Caco-2 (cell line): ENCODE measurements at regions of chr5 and their contacts with region 1.

Region 1: DNA sequence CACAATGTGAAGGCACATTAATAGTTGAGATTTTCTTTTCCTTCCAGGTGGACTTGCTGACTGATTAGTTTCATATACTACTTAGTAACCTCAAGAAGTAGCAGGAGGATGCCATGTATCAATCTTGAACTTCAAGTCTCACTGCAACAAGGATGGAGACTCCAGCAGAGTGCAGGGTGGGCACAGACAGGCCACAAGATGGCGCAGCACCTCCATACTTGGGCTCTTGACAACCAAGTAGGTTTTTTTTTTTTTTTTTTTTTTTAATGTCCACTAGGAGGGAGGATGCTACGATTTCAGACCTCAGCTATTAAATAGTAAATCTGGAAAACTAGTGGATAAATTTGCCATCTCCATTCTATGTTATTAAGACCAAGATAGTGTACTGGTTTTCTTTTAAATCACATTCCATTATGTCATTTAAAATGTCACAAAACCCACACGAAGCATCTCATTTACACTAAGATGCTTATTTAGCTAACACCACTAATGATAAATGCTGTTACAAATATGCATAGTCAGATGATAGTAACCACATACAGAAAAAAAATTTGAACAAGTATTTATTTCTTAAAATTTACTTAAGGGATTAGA is 58.6 kb downstream of the IL6ST start:
- DNase-seq: peak; percentile 87
- H3K4me3 ChIP-seq: no peak overlapping the region
- H3K4me3 Mint-ChIP-seq: no peak overlapping the region
- H3K27ac Mint-ChIP-seq: peak overlapping the region; percentile 100
- H3K4me1 ChIP-seq: peaks cover 44% of the 10 kb centered on the region
- H3K4me1 Mint-ChIP-seq: peaks cover 48% of the 10 kb centered on the region
- H3K27me3 ChIP-seq: no peaks in the 10 kb centered on the region
- H3K27me3 Mint-ChIP-seq: no peaks in the 10 kb centered on the region
- CTCF ChIP-seq: peak; percentile 85 to 95

Region 2: DNA sequence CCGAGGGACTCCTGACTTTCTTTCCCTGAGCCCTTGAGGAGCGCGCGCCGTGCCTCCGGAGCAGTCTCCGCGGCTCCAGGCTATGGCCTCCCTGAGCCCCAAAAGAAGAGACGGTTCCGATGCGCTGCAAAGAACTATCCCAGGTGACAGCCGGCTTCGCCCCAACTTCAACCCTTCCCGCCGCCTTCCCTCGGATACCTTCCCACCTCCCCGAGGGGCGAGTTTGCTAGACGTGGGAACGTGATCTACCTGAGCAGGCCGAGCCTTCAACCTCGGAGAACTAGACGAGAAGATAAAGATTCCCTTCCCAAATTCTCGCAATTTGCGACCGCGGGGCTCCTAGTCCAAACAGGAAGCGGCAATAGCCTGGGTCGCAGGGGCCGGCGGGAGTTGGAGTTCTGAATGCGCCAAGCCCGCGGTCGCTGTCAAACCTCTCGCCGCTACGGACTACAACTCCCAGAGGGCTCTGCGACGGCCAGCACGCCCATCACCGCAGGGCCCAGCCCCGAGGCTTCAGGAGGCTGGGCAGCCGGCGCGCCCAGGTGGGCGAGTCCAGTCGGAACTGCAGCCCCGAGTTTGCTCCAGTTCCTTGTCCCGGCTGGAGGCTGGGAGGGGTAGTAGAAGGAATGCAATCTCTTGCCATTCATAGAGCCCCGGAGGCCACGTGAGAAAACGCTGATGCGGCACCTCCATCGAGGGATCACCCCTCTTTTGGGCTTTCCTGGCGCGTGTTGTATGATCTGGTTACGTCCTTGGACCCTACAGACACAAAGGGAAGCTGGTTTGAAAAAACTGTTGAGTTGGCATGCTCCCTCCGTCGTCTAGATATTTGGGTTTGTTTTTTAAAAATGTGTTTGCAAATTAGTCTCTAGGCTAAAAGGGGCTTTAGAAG is 224.0 kb before region 1 on chr5 and contains the start of gene SLC38A9:
- CTCF ChIA-PET with region 1: no interaction called
- POLR2A ChIA-PET with region 1: no interaction called
- intact Hi-C with region 1: loop called (anchors 1 kb)
- DNase-seq: peak; percentile 96 to 97
- H3K4me3 ChIP-seq: peak within 1 kb of the TSS; percentile 97
- H3K4me3 Mint-ChIP-seq: peak within 1 kb of the TSS; percentile 100
- H3K27ac Mint-ChIP-seq: peak within 1 kb of the TSS; percentile 99
- H3K4me1 ChIP-seq: peaks cover 11% of the 10 kb centered on the region
- H3K4me1 Mint-ChIP-seq: peaks cover 6% of the 10 kb centered on the region
- H3K27me3 ChIP-seq: no peaks in the 10 kb centered on the region
- H3K27me3 Mint-ChIP-seq: no peaks in the 10 kb centered on the region
- CTCF ChIP-seq: no peak
- total RNA-seq, gene SLC38A9: 65.4 and 66.9 TPM in 2 replicates

Region 3: DNA sequence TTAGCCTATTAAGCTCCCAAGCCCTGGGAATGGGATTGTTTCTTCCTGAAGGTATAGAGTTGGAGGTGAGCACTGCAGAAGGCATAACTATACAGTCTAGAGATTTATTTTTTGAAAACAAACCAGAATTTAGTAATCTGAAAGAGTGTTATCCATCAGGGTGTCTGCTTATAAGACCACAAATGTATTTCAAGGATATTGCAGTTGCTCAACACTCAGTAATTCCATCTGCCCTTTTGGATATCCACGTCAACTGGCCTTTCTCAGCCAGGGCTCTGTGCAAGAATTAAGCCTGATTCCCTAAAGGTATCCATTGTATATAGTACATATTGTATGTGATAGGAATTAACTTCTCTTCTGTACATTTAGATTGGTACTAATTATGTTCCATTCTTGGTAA is 100.0 kb before region 1 on chr5:
- CTCF ChIA-PET with region 1: no interaction called
- POLR2A ChIA-PET with region 1: no interaction called
- intact Hi-C with region 1: no loop called
- DNase-seq: no peak
- H3K4me3 ChIP-seq: no peak overlapping the region
- H3K4me3 Mint-ChIP-seq: no peak overlapping the region
- H3K27ac Mint-ChIP-seq: no peak overlapping the region
- H3K4me1 ChIP-seq: no peaks in the 10 kb centered on the region
- H3K4me1 Mint-ChIP-seq: no peaks in the 10 kb centered on the region
- H3K27me3 ChIP-seq: no peaks in the 10 kb centered on the region
- H3K27me3 Mint-ChIP-seq: no peaks in the 10 kb centered on the region
- CTCF ChIP-seq: no peak

Region 4: DNA sequence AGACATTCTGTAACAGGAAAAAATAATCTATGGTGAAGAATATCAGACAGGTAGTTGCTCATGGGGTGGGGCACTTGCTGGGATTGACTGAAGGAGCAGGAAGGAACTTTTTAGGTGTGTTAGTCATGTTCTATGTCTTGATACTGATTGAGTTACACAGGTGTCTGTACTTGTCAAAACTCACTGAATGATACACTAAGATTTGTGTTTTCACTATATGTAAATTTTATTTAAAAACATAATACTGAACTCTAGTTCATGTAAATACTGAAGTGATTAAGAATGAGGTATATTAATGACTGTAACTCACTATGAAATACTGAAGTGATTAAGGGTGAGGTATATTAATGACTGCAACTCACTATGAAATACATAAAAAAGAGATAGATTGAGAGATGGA is 30.1 kb after region 1 on chr5:
- CTCF ChIA-PET with region 1: no interaction called
- POLR2A ChIA-PET with region 1: no interaction called
- intact Hi-C with region 1: no loop called
- DNase-seq: no peak
- H3K4me3 ChIP-seq: no peak overlapping the region
- H3K4me3 Mint-ChIP-seq: no peak overlapping the region
- H3K27ac Mint-ChIP-seq: peak overlapping the region; percentile 42
- H3K4me1 ChIP-seq: no peaks in the 10 kb centered on the region
- H3K4me1 Mint-ChIP-seq: peaks cover 6% of the 10 kb centered on the region
- H3K27me3 ChIP-seq: no peaks in the 10 kb centered on the region
- H3K27me3 Mint-ChIP-seq: no peaks in the 10 kb centered on the region
- CTCF ChIP-seq: no peak

Region 5: GRCh38 chr5:55982957-55983381 is 46.8 kb after region 1 on chr5:
- CTCF ChIA-PET with region 1: interaction called, 3 read pairs
- POLR2A ChIA-PET with region 1: no interaction called
- intact Hi-C with region 1: loop called (anchors 1 kb)
- DNase-seq: peak; percentile 50 to 60
- H3K4me3 ChIP-seq: no peak overlapping the region
- H3K4me3 Mint-ChIP-seq: no peak overlapping the region
- H3K27ac Mint-ChIP-seq: no peak overlapping the region
- H3K4me1 ChIP-seq: peaks cover 50% of the 10 kb centered on the region
- H3K4me1 Mint-ChIP-seq: peaks cover 30% of the 10 kb centered on the region
- H3K27me3 ChIP-seq: no peaks in the 10 kb centered on the region
- H3K27me3 Mint-ChIP-seq: no peaks in the 10 kb centered on the region
- CTCF ChIP-seq: peak; percentile 36 to 57

Region 6: GRCh38 chr5:56037531-56038010 is 101.4 kb after region 1 on chr5:
- CTCF ChIA-PET with region 1: no interaction called
- POLR2A ChIA-PET with region 1: no interaction called
- intact Hi-C with region 1: no loop called
- DNase-seq: no peak
- H3K4me3 ChIP-seq: no peak overlapping the region
- H3K4me3 Mint-ChIP-seq: no peak overlapping the region
- H3K27ac Mint-ChIP-seq: no peak overlapping the region
- H3K4me1 ChIP-seq: peaks cover 14% of the 10 kb centered on the region
- H3K4me1 Mint-ChIP-seq: peaks cover 22% of the 10 kb centered on the region
- H3K27me3 ChIP-seq: no peaks in the 10 kb centered on the region
- H3K27me3 Mint-ChIP-seq: no peaks in the 10 kb centered on the region
- CTCF ChIP-seq: no peak

Region 7: DNA sequence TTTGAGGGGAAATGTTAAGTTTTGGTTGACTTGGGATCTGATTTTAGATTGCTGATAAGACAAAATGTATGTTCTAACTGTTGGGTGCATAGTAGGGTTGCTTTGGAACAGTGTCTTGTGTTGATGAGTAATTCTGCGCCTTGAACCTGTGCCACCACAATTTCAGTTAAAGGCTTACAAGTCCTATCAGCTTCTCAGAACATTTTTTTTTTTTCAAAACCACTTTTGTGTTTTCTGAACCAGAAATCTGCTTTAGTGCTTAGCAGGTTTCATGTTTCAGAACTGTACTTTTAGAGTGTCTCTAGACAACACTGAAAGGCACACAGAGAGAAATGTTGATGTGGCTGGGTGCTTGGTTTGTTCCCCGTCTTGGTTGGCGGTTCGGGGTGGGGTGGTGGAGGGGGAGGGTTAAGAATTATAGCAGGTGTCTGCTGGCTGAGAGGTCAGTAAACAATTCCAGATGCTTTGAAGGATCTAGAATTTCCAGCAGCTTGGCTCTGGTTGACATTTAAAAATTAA is 212.3 kb after region 1 on chr5:
- CTCF ChIA-PET with region 1: interaction called, 6 read pairs
- POLR2A ChIA-PET with region 1: interaction called, 3 read pairs
- intact Hi-C with region 1: loop called (anchors 1 kb)
- DNase-seq: no peak
- H3K4me3 ChIP-seq: no peak overlapping the region
- H3K4me3 Mint-ChIP-seq: no peak overlapping the region
- H3K27ac Mint-ChIP-seq: peak overlapping the region; percentile 32
- H3K4me1 ChIP-seq: peaks cover 55% of the 10 kb centered on the region
- H3K4me1 Mint-ChIP-seq: peaks cover 38% of the 10 kb centered on the region
- H3K27me3 ChIP-seq: no peaks in the 10 kb centered on the region
- H3K27me3 Mint-ChIP-seq: no peaks in the 10 kb centered on the region
- CTCF ChIP-seq: no peak

Region 8: GRCh38 chr5:56838409-56839039 is 902.3 kb after region 1 on chr5:
- CTCF ChIA-PET with region 1: no interaction called
- POLR2A ChIA-PET with region 1: no interaction called
- intact Hi-C with region 1: loop called (anchors 10 kb)
- DNase-seq: peak in 1 of 2 experiments; percentile 39
- H3K4me3 ChIP-seq: no peak overlapping the region
- H3K4me3 Mint-ChIP-seq: no peak overlapping the region
- H3K27ac Mint-ChIP-seq: peak overlapping the region; percentile 22
- H3K4me1 ChIP-seq: peaks cover 43% of the 10 kb centered on the region
- H3K4me1 Mint-ChIP-seq: peaks cover 45% of the 10 kb centered on the region
- H3K27me3 ChIP-seq: no peaks in the 10 kb centered on the region
- H3K27me3 Mint-ChIP-seq: no peaks in the 10 kb centered on the region
- CTCF ChIP-seq: peak; percentile 36 to 53

Region 9: GRCh38 chr5:57209351-57210040 is 1273.3 kb after region 1 on chr5:
- CTCF ChIA-PET with region 1: no interaction called
- POLR2A ChIA-PET with region 1: no interaction called
- intact Hi-C with region 1: no loop called
- DNase-seq: no peak
- H3K4me3 ChIP-seq: no peak overlapping the region
- H3K4me3 Mint-ChIP-seq: no peak overlapping the region
- H3K27ac Mint-ChIP-seq: peak overlapping the region; percentile 64
- H3K4me1 ChIP-seq: no peaks in the 10 kb centered on the region
- H3K4me1 Mint-ChIP-seq: peaks cover 15% of the 10 kb centered on the region
- H3K27me3 ChIP-seq: no peaks in the 10 kb centered on the region
- H3K27me3 Mint-ChIP-seq: no peaks in the 10 kb centered on the region
- CTCF ChIP-seq: no peak